ENCODE measurements at regions of chr12 and their contacts with region 1.

Region 1: DNA sequence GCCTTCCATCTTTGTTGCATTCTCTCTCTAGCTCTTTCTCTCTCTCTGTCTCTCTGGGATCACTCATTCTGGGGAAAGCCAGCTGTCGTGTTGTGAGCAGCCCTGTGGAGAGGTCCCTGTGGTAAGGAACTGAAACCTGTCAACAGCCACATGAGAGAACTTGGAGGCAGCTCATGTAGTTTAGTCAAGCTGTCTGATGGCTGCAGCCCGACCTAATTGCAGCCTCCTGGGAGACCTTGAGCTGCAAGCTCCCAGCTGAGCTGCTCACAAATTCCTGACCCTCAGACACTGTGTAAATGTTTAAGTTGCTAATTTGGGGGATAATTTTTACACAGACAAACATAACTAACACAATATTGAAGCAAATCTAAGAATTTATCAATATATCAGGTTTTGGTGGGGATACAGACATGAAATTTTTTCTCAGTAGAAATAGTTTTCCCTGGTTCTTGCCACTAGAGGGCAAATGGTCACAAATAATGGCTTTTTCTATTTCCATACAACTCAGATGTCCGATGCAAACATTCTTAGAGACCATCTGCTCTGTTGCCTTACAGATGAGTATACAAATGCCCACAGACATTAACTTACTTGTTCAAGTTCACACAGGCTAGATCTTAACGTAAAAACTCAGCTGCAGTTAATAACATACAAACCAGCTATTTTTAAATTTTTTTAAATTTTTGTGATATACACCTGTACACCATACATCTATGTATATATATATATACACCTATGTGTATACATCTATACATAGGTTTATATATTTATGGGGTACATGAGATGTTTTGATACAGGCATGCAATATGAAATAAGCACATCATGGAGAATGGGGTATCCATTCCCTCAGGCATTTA is 15.5 kb upstream of the KRR1 start:
- DNase-seq: peak; percentile 74
- H3K4me3 Mint-ChIP-seq: no peak overlapping the region
- H3K27ac Mint-ChIP-seq: peak overlapping the region; percentile 34
- H3K4me1 Mint-ChIP-seq: peaks cover 7% of the 10 kb centered on the region
- H3K27me3 Mint-ChIP-seq: peaks cover 34% of the 10 kb centered on the region

Region 2: GRCh38 chr12:75437564-75437963 is 89.3 kb before region 1 on chr12:
- intact Hi-C with region 1: no loop called
- DNase-seq: no peak
- H3K4me3 Mint-ChIP-seq: no peak overlapping the region
- H3K27ac Mint-ChIP-seq: no peak overlapping the region
- H3K4me1 Mint-ChIP-seq: peaks cover 8% of the 10 kb centered on the region
- H3K27me3 Mint-ChIP-seq: peaks cover 5% of the 10 kb centered on the region

Region 3: DNA sequence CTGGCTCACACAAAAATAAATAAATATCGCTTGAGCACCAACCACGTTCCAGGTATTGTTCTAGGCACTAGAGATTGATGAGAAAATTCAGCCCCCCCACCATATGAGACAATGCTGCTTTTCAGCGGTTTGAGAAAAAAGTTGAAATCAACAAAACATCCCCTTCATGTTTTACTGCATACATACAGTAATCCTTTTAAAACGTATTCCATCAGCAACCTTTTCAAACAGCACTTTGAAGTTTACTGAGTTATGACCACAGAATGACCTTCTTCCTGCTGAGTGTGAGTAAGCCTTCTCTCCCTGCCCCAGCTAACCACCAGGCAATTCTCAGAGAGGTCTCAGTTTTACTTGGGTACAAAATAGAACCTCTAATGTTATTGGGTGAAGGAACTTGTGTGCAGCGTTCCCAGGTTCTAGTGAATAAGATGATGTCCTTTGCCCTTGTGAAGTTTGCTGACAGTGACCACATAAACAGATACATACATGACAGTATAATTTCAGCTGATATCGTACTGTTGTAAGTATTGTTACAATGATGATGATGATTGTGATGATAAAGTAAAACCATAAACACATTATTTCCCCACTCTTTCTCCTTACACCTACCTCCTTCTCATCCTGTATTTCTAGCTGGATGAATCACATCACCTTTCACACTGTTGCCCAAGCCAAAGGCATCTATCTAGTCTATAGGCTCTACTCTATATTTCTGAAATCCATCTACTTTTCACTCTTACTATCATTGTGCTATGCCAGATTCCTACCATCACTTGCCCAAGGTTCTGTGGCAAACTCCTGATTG is 108.9 kb after region 1 on chr12:
- intact Hi-C with region 1: loop called (anchors 5 kb)
- DNase-seq: peak; percentile 67
- H3K4me3 Mint-ChIP-seq: peak overlapping the region; percentile 4
- H3K27ac Mint-ChIP-seq: peak overlapping the region; percentile 42
- H3K4me1 Mint-ChIP-seq: peaks cover 29% of the 10 kb centered on the region
- H3K27me3 Mint-ChIP-seq: no peaks in the 10 kb centered on the region

Region 4: GRCh38 chr12:75712252-75712651 is 185.4 kb after region 1 on chr12:
- intact Hi-C with region 1: loop called (anchors 10 kb)
- DNase-seq: no peak
- H3K4me3 Mint-ChIP-seq: no peak overlapping the region
- H3K27ac Mint-ChIP-seq: no peak overlapping the region
- H3K4me1 Mint-ChIP-seq: peaks cover 12% of the 10 kb centered on the region
- H3K27me3 Mint-ChIP-seq: peaks cover 26% of the 10 kb centered on the region

Region 5: DNA sequence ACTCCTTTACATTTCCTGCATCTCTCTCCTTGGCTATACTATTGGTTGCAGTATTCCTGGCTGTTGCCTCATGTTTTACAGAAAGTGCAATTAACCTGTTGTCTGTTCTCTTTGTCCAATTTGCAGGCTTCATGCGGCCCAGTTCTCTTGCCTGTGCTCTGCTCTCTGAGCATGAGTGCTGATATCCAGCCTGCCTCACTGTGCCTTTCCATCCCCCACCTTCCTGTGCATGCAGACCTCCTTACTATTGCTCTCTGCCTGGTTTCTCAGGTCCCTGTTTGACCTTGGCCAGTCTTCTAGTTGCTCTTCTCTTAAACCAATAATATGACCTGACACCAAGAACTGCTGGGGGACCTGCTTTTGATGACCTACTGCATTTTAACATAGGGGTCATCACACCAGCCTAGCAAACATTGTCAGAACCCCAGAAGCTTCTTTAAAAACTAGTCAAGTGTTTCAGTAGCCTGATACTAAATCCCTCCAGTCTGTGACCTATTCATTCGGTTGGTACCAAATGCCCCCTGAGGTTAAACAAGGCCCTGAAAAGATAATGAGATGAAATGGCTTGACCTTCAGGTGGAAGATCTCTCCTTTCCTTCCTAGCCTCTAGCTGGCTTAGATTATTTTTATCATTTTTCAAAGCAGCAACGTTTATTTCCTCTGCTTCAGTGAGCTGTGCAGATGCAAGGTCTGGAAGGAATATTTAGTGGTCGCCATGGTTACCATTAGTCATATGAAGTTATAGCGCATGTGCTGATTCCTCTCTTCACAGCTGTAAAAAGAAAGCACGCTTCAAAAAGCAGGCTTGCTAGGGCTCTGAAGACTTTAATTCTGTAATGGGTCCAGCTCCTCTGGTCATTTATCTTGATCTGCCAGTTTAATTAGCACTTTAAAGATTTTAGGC is 288.2 kb after region 1 on chr12:
- intact Hi-C with region 1: loop called (anchors 10 kb)
- DNase-seq: no peak
- H3K4me3 Mint-ChIP-seq: no peak overlapping the region
- H3K27ac Mint-ChIP-seq: no peak overlapping the region
- H3K4me1 Mint-ChIP-seq: peaks cover 13% of the 10 kb centered on the region
- H3K27me3 Mint-ChIP-seq: peaks cover 3% of the 10 kb centered on the region

Region 6: DNA sequence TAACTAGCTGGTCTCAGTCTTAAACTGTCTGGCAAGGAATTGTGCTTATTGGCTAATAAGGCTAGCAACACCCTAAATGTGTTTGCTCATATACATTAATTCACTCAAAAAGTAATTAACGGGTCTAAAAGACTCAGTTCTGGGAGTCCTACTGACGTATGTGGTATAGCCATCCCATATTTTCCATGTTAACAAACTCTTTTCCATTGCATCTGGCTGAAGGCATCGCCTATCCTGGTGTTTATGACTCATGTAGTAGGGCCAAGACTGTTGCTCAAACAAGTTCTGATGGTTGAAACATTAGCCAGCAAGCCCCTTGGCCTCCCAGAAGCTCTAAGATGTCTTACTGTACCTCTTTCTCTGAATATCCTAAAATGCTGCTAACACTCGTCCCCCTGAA is 406.2 kb after region 1 on chr12:
- intact Hi-C with region 1: loop called (anchors 5 kb)
- DNase-seq: no peak
- H3K4me3 Mint-ChIP-seq: no peak overlapping the region
- H3K27ac Mint-ChIP-seq: no peak overlapping the region
- H3K4me1 Mint-ChIP-seq: peaks cover 45% of the 10 kb centered on the region
- H3K27me3 Mint-ChIP-seq: no peaks in the 10 kb centered on the region

Region 7: GRCh38 chr12:76037130-76038103 is 510.5 kb after region 1 on chr12:
- intact Hi-C with region 1: loop called (anchors 1 kb)
- DNase-seq: peak; percentile 80
- H3K4me3 Mint-ChIP-seq: no peak overlapping the region
- H3K27ac Mint-ChIP-seq: no peak overlapping the region
- H3K4me1 Mint-ChIP-seq: peaks cover 24% of the 10 kb centered on the region
- H3K27me3 Mint-ChIP-seq: no peaks in the 10 kb centered on the region

Region 8: GRCh38 chr12:76455582-76456345 is 928.9 kb after region 1 on chr12:
- intact Hi-C with region 1: loop called (anchors 5 kb)
- DNase-seq: peak; percentile 73
- H3K4me3 Mint-ChIP-seq: no peak overlapping the region
- H3K27ac Mint-ChIP-seq: no peak overlapping the region
- H3K4me1 Mint-ChIP-seq: peaks cover 14% of the 10 kb centered on the region
- H3K27me3 Mint-ChIP-seq: no peaks in the 10 kb centered on the region